Lower leg skin (tissue), 4 donors: ENCODE measurements at regions of chr1 and their contacts with region 1.

Region 1: DNA sequence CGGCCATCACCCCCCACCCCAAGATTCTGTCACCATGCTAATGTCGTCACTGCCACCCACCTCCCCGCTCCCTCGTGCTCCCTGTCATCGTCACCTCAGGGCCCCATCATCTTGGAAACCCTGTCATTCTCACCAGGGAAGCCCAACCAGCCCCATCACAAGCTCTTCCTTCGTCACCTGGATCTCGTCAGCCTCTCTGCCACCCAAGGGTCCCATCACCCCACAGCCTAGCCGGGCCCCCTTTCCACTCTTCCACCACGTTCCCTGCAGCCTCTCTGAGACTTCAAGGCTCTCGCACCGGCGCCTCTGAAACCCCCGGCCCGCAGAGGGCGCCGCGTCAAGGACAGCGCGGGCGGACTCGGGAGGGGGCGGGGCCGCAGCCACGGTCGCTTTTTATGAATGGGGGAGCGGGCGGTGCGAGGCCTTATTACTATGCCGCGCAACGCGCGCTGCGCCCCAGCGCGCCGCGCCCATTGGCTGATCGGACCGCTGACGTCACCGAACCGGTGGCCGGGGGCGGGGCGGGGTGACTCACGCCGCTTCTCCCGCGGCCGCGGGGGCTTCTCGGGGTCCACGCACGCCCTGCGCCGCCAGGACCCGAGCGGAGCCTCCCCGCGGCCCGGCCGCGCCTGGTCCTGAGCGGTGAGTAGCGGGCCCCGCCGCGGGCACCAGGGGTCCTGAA is at the start of gene GPR3:
- DNase-seq: peak; percentile 83 to 98
- H3K4me3 ChIP-seq: peak within 1 kb of the TSS; percentile 15
- CTCF ChIP-seq: peak in 1 of 3 donors; percentile 65
- POLR2A ChIP-seq: no peak
- total RNA-seq, gene GPR3: 0.22 to 1.3 (median 0.68) TPM

Region 2: GRCh38 chr1:27257155-27257554 is 135.1 kb before region 1 on chr1:
- intact Hi-C with region 1: no loop called
- DNase-seq: no peak
- H3K4me3 ChIP-seq: no peak overlapping the region
- CTCF ChIP-seq: no peak
- POLR2A ChIP-seq: no peak

Region 3: DNA sequence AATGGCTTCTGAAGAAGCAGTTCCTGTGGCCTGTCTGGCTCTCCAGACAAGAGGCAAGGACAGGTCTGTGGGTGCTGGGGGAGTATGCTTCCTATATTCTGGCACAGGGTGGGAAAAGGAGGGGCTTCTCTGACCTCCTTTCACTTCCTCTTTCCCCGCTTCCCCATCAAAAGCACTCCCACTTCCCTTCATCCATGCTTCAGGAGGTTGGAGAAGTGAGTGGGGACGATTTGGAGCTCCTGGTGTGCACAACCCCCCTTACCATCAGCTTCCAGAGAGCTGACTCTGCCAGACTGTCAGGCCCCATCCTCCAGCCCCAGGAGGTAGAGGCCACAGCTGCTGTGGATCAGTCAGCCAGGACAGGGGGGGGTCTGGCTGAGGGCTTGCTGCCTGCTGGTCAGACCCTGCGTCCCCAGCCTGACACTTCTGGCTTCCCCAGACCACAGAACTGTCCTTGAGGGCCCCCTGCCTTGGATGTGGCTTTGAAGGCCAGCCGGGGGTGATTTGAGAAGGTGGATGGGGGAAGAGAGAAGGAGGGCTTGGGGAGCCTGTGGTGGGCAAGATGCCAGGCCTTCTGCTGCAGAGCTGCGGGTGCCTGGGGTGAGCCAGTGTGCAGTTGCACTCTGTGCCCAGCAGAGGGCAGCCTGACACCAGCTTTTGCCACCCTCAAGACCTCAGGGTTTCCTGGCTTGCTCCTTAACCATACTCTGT is 91.7 kb before region 1 on chr1:
- intact Hi-C with region 1: loop called (anchors 2 kb)
- DNase-seq: peak; percentile 78 to 96
- H3K4me3 ChIP-seq: no peak overlapping the region
- CTCF ChIP-seq: peak in 1 of 3 donors; percentile 90
- POLR2A ChIP-seq: no peak

Region 4: DNA sequence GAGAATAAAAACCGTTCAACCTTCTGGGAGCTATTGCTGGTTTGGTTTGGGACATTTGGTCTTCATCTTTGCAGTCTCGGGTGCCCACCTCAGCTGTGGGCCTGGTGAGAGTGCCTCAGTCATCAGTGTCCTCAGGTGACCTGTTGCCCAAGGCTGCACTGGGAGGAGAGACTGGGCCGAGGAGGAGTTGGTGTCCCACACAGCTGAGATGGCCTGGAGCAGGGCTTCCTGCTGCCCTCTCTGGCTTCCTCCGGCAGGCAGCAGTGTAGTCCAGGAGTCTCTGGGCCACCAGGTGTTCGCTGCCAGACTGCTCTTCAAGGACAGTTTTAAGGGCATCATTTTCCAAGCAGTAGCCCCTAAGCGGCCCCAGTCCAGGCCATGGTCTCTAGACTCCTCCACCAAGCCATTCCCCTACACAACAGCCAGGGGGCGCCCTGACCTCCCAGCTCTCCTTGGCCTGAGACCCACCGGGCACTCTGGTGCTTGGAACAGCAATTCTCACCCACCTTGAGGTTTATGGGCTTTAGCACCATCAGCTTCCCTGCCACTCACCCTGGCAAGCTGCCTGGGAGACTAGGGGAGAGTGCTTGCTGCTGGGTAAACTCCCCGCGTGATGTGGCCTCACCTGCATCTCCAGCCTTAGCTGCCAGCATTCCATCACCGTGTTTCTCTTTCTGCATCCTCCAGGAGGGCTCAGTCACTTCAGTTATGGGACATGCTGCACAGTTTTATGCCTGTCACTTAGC is 59.5 kb before region 1 on chr1:
- intact Hi-C with region 1: loop called (anchors 10 kb)
- DNase-seq: no peak
- H3K4me3 ChIP-seq: no peak overlapping the region
- CTCF ChIP-seq: no peak
- POLR2A ChIP-seq: no peak